Activated naive CD4-positive, alpha-beta T cell treated with anti-CD3 and anti-CD28 coated beads for 36 hours (primary cell): ENCODE measurements at regions of chr17 and their contacts with region 1.

Region 1: GRCh38 chr17:7252176-7253043 is at the start of gene ELP5:
- DNase-seq: peak; percentile 93
- H3K4me3 Mint-ChIP-seq: peak within 1 kb of the TSS; percentile 86
- H3K27ac Mint-ChIP-seq: peak within 1 kb of the TSS; percentile 99
- H3K4me1 Mint-ChIP-seq: peaks cover 34% of the 10 kb centered on the region
- H3K27me3 Mint-ChIP-seq: no peaks in the 10 kb centered on the region
- total RNA-seq, gene ELP5: 52.4 to 53.5 TPM

Region 2: DNA sequence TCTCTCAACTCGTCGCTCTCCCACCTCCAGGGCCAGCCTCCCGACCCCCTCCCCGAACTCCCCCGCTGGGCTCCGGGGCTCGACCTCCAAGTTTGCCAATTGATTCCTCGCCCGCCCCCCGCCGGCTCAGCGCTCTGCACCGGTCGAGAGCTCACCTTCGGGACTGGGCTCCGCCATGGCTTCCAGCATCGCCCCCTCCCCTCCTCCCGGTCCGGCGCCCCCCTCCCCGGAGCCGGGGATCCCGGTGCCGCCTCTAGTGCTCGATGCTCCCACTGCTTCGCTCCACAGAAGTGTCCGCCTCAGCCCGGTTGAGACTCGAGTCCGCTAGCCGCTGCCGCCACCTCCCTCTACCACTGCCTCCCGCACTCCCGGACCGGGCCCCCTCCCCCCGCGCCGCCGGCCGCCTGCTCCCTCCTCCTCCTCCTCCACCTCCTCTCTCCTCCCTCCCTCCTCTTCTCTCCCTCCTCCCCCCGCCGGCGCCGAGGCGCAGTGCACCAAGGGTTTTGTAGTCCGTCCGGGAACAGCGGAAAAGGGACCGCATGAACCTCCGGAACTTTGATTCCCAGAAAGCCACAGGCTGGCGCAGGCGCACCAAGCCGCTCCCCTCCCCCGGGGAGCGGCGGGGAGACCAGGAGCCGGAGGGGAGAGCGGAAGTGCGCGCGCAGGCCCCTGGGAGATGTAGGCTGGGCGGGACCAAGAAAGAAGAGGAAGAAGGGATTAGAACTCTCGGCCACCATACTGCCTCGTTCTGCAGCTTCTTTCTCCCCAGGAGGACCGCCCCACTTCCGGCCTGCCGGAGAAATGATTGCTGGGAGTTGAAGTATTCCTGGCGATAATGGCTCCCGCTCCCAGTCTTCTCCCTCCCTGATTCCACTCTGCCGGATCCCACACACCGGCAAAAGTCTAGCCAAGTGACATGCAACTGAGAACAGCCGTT is 13.1 kb before region 1 on chr17 and contains the start of gene PHF23:
- CTCF ChIA-PET with region 1: no interaction called
- intact Hi-C with region 1: loop called (anchors 1 kb)
- DNase-seq: peak; percentile 99
- H3K4me3 Mint-ChIP-seq: peak within 1 kb of the TSS; percentile 94
- H3K27ac Mint-ChIP-seq: peak within 1 kb of the TSS; percentile 98
- H3K4me1 Mint-ChIP-seq: peaks cover 64% of the 10 kb centered on the region
- H3K27me3 Mint-ChIP-seq: no peaks in the 10 kb centered on the region
- total RNA-seq, gene PHF23: 8.4 to 10.0 TPM

Region 3: GRCh38 chr17:7280519-7281429 is 28.4 kb after region 1 on chr17:
- CTCF ChIA-PET with region 1: interaction called, 3 read pairs
- intact Hi-C with region 1: loop called (anchors 1 kb)
- DNase-seq: peak; percentile 91
- H3K4me3 Mint-ChIP-seq: peak overlapping the region; percentile 74
- H3K27ac Mint-ChIP-seq: no peak overlapping the region
- H3K4me1 Mint-ChIP-seq: peaks cover 20% of the 10 kb centered on the region
- H3K27me3 Mint-ChIP-seq: peaks cover 17% of the 10 kb centered on the region

Region 4: DNA sequence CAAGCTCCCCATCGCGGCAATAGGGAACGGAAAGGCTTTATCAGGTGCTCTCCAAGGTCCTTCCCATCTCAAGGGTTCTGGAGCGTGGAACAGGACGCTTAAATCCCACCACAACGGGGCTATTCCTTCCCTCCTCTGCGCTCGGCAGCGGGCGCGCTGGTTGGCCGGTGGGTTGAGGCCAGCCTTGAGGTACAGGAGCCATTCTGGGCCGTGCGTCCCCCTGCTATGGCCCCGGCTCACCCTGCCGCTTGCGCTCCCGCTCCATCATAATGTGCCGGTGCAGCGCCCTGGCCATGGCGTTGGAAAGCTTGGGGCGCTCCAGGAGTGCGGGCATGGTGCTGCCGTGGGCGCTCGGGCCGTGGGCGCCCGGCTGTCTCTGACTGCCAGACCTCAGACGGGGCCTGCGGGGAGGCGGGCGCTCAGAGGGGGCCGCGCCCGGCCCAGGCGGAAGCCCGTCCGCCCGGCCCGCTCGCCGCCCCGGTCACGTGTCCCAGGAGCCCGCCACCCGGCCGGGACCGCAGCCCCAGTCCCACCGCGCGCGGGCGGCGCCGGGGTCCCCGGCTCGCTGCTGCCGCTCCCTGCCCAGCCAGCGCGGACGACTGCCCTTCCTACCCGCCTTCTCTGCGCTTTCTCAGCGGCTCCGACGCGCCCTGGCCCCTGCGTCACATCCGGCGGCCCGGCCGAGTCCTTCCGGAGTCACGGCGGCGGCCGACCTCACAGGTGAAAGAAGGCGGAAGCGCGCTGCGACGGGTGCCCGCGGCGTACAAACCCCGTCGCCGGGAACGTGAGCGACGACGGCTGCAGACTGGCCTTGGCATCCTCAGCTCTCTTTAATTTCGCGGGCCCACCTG is 62.5 kb after region 1 on chr17 and contains the start of gene GPS2:
- CTCF ChIA-PET with region 1: no interaction called
- intact Hi-C with region 1: no loop called
- DNase-seq: peak; percentile 95
- H3K4me3 Mint-ChIP-seq: peak within 1 kb of the TSS; percentile 86
- H3K27ac Mint-ChIP-seq: peak within 1 kb of the TSS; percentile 88
- H3K4me1 Mint-ChIP-seq: peaks cover 49% of the 10 kb centered on the region
- H3K27me3 Mint-ChIP-seq: no peaks in the 10 kb centered on the region
- total RNA-seq, gene GPS2: 28.2 to 32.2 TPM

Region 5: DNA sequence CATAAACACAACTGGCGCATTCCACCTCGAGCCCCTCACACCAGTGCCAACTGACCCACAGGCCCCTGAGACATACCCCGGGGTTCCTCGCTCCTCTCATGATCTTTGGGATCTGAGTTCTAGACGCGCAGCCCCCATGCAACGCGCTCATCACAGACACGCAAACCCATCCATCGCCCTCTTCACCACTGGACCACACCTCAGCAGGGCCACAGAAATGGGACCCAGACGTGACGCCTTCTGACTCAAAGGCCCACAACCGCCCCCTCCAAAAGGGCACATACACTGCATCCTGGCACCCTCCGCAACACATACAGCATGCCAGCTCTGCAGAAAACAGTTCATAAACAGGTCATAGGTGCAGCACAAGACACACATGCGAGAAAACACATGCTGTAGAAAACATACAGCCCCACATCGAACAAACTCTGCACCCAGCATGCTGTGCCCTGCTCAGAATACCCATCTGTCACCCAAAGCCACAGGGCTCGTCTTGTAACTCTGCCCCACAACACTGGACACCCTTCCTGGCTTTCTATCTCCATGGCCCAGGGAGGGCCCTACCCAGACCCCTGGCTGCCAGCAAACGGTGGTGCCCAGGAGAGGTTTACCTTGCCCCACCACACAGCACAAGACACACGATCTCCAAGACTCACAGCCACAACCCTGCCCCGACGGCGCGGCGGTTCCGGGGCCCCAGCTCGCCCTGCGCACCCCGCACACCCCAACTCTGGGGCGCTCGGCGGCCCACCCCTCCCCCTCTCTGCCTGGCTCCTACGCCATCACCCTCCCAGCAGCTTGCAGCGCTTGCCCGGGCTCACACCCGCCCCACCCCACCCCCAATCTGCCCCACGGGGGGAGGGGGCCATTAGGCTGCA is 226.1 kb after region 1 on chr17:
- CTCF ChIA-PET with region 1: no interaction called
- intact Hi-C with region 1: no loop called
- DNase-seq: peak; percentile 67
- H3K4me3 Mint-ChIP-seq: peak overlapping the region; percentile 92
- H3K27ac Mint-ChIP-seq: peak overlapping the region; percentile 87
- H3K4me1 Mint-ChIP-seq: peaks cover 66% of the 10 kb centered on the region
- H3K27me3 Mint-ChIP-seq: no peaks in the 10 kb centered on the region